ENCODE measurements at regions of chr7 and their contacts with region 1.

Region 1: DNA sequence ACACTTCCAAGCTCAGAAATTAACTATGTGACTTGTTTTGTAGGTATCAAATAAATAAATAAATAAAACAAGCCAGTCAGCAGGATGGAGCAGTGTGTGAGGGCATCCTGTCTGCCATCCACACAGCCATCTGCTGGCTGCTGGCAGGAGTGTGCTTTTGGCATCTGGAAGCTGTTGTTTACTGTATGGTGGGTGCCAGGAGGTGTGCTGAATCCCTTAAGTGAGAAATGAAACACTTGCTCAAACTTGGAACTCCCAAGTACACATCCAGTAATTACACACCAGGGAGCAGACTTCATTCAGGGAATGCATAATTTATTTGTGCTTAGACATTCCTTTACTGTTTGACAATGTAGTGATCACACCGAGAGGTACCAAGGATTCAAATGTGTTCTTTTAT is 16.9 kb upstream of the TAX1BP1 start:
- DNase-seq: no peak
- ATAC-seq: no peak; the same call in 1 of the 2 replicates
- H3K4me3 ChIP-seq: no peak overlapping the region
- H3K27ac ChIP-seq: no peak overlapping the region
- H3K4me1 ChIP-seq: no peaks in the 10 kb centered on the region
- H3K27me3 ChIP-seq: no peaks in the 10 kb centered on the region
- CTCF ChIP-seq: peak; percentile 25; the same call in 1 of the 2 replicates
- POLR2A ChIP-seq: no peak
- RAD21 ChIP-seq: peak; percentile 31; the same call in 1 of the 2 replicates

Region 2: DNA sequence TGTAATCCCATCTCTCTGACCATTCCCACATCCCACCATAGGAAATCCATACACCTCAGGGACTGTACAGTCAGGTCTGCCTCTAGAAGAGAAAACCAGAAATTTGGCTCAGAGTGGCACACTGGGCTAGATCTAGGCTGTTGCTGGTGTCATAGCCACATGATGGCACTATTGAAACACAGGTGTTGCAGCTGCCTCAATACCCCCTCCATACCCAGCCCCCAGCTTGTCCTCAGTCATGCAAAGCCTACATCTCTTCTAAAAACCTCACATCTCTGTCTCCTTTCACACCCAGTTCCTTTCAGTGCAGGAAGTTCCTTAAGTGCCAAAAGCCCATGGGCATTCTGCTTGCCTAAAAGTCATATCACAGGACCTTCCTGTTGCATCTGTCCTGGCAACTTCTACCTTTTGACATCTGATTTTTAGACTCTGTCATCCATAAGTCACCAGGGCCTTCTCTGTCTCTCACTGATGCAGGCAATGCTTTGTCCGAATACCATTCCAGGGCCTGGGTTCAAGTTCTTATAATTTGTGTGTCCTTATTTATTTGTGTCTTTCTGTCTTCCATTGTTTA is 33.4 kb before region 1 on chr7:
- CTCF ChIA-PET with region 1: no interaction called
- POLR2A ChIA-PET with region 1: no interaction called
- dilution Hi-C with region 1: no loop called
- in situ Hi-C with region 1: no loop called
- intact Hi-C with region 1: loop called (anchors 5 kb)
- DNase-seq: peak; percentile 31
- ATAC-seq: peak; percentile 73
- H3K4me3 ChIP-seq: no peak overlapping the region
- H3K27ac ChIP-seq: no peak overlapping the region
- H3K4me1 ChIP-seq: 0 out of 2 replicates have a peak, but pooled peaks cover 2% of the 10 kb centered on the region
- H3K27me3 ChIP-seq: no peaks in the 10 kb centered on the region
- CTCF ChIP-seq: peak; percentile 45
- POLR2A ChIP-seq: no peak
- RAD21 ChIP-seq: peak; percentile 64

Measured in IMR-90 (cell line).